CD8-positive, alpha-beta T cell (primary cell): ENCODE measurements at regions of chr22 and their contacts with region 1.

Region 1: DNA sequence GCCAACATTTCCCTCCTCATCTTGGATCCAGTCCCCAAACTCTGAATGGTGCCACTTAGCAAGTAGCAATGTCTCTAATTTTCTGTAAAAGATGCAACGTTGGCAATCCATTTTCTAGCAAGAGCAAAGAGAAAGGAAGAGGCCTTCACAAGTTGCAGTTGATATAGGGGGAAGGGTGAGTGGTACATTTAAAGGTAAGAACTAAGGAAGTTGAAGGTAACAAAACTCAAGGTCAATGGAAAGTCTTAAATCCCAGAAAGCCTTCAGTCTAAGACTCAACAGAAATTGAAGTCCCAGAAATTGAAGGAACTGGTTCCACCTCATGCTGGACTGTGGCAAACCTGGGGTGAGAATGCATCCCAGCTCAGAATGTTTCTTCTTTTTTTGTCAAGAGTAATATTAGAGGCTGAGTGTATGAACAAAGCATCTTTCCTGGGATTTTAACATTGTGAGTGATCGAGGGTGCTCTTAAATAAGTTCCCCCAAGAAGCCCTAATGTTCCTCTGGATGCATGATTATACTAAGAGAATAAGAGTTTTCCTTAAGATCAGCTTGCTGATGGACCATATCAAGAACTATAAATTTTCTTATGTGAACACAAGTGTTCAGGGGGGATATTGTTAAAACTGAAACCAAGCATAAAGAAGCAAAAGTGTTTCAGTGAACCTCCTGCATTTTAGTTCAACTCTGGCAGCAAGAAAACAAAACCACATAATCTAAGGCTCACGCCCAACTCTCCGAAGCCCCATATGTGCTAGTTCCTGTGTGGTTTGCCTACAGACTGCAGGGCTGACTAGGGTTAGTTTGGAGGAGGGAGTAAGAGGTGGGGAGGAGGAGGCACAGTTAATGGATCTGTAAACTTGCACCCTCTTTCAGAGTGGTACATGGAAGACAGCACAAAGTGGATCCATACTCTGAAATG is at the start of gene GRAP2:
- DNase-seq: peak; percentile 49 to 93 (median 74)
- ATAC-seq: peak; percentile 92
- H3K4me3 ChIP-seq: peak within 1 kb of the TSS; percentile 77 to 80
- H3K4me3 Mint-ChIP-seq: peak within 1 kb of the TSS; percentile 97
- H3K27ac ChIP-seq: peak within 1 kb of the TSS; percentile 71 to 80
- H3K27ac Mint-ChIP-seq: peak within 1 kb of the TSS; percentile 91
- H3K4me1 ChIP-seq: peaks cover 42% of the 10 kb centered on the region
- H3K4me1 Mint-ChIP-seq: peaks cover 27% of the 10 kb centered on the region
- H3K27me3 ChIP-seq: no peaks in the 10 kb centered on the region
- H3K27me3 Mint-ChIP-seq: no peaks in the 10 kb centered on the region
- CTCF ChIP-seq: no peak
- total RNA-seq, gene GRAP2: 105 TPM

Region 2: GRCh38 chr22:39927544-39927943 is 27.0 kb after region 1 on chr22:
- CTCF ChIA-PET with region 1: interaction called, 35 read pairs
- POLR2A ChIA-PET with region 1: interaction called, 260 read pairs
- intact Hi-C with region 1: loop called (anchors 2 kb)
- DNase-seq: peak in 2 of 9 experiments; percentile 11 to 52
- ATAC-seq: no peak
- H3K4me3 ChIP-seq: peak overlapping the region; percentile 56 to 76
- H3K4me3 Mint-ChIP-seq: no peak overlapping the region
- H3K27ac ChIP-seq: peak overlapping the region; percentile 29 to 49
- H3K27ac Mint-ChIP-seq: no peak overlapping the region
- H3K4me1 ChIP-seq: peaks cover 82% of the 10 kb centered on the region
- H3K4me1 Mint-ChIP-seq: peaks cover 40% of the 10 kb centered on the region
- H3K27me3 ChIP-seq: no peaks in the 10 kb centered on the region
- H3K27me3 Mint-ChIP-seq: no peaks in the 10 kb centered on the region
- CTCF ChIP-seq: peak; percentile 20

Region 3: DNA sequence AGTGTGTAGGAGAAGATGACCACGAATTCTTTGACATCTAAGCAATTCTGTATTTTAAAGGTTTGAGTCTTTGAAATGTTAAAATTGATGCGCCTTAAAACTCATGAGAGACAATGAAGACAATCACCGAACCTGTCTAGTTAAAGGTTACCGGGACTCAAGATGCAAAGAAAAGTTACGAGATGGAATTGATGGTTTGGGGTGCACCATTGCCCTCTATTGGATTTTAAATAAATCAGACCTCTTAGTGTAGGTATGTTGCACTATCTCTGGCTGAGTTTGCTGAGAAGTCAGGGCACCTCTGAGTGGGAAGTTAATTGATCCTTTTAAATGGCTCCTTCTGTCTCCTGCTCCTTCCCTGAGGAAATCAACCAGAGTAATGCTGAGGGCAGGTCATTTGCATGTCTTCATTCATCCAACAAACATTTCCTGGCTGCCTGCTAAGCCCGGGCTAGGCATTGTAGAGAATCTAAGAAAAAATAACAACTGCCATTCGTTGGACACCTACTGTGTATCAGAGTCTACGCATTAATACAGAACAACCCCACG is 40.3 kb after region 1 on chr22:
- CTCF ChIA-PET with region 1: interaction called, 50 read pairs
- POLR2A ChIA-PET with region 1: interaction called, 7 read pairs
- intact Hi-C with region 1: loop called (anchors 1 to 2 kb)
- DNase-seq: peak in 2 of 9 experiments; percentile 78 to 87
- ATAC-seq: peak; percentile 49
- H3K4me3 ChIP-seq: peak overlapping the region in 1 of 2 experiments; percentile 40
- H3K4me3 Mint-ChIP-seq: peak overlapping the region; percentile 56
- H3K27ac ChIP-seq: peak overlapping the region; percentile 22 to 76
- H3K27ac Mint-ChIP-seq: no peak overlapping the region
- H3K4me1 ChIP-seq: peaks cover 98% of the 10 kb centered on the region
- H3K4me1 Mint-ChIP-seq: peaks cover 92% of the 10 kb centered on the region
- H3K27me3 ChIP-seq: no peaks in the 10 kb centered on the region
- H3K27me3 Mint-ChIP-seq: no peaks in the 10 kb centered on the region
- CTCF ChIP-seq: peak; percentile 62

Region 4: GRCh38 chr22:39954584-39955055 is 54.1 kb after region 1 on chr22:
- CTCF ChIA-PET with region 1: interaction called, 10 read pairs
- POLR2A ChIA-PET with region 1: interaction called, 5 read pairs
- intact Hi-C with region 1: loop called in 1 of 2 experiments (anchors 2 kb)
- DNase-seq: no peak
- ATAC-seq: no peak
- H3K4me3 ChIP-seq: no peak overlapping the region
- H3K4me3 Mint-ChIP-seq: no peak overlapping the region
- H3K27ac ChIP-seq: peak overlapping the region in 1 of 2 experiments; percentile 31
- H3K27ac Mint-ChIP-seq: peak overlapping the region; percentile 92
- H3K4me1 ChIP-seq: peaks cover 94% of the 10 kb centered on the region
- H3K4me1 Mint-ChIP-seq: peaks cover 88% of the 10 kb centered on the region
- H3K27me3 ChIP-seq: no peaks in the 10 kb centered on the region
- H3K27me3 Mint-ChIP-seq: no peaks in the 10 kb centered on the region
- CTCF ChIP-seq: no peak

Region 5: DNA sequence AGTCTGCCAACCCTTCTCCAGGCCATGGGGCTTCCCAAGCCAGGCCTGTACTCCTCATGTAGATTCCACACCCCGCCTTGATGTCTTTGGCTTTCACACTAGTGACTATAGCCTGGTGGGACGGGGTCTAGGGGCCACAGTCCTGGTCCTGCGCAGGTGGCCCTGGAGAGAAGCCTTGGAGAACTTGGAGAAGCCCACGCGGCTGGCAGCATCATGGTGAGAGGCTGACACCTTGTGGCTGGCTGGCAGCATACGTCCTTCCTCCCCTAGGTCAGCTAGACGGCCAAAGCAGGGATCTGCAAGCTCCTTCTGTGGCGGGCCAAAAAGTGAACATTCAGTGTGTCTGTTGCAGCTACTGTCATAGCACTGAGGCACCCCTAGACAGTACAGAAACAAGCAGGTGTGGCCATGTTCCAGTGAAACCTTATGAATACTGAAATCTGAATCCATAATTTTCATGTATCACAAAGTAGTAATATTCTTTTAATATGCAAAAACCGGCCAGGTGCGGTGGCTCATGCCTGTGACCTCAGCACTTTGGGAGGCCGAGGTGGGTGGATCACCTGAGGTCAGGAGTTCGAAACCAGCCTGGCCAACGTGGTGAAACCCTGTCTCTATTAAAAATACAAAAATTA is 136.1 kb after region 1 on chr22:
- CTCF ChIA-PET with region 1: interaction called, 13 read pairs
- POLR2A ChIA-PET with region 1: no interaction called
- intact Hi-C with region 1: loop called (anchors 5 kb)
- DNase-seq: peak in 8 of 9 experiments; percentile 31 to 71 (median 46)
- ATAC-seq: peak; percentile 67
- H3K4me3 ChIP-seq: no peak overlapping the region
- H3K4me3 Mint-ChIP-seq: no peak overlapping the region
- H3K27ac ChIP-seq: no peak overlapping the region
- H3K27ac Mint-ChIP-seq: no peak overlapping the region
- H3K4me1 ChIP-seq: no peaks in the 10 kb centered on the region
- H3K4me1 Mint-ChIP-seq: peaks cover 10% of the 10 kb centered on the region
- H3K27me3 ChIP-seq: no peaks in the 10 kb centered on the region
- H3K27me3 Mint-ChIP-seq: peaks cover 21% of the 10 kb centered on the region
- CTCF ChIP-seq: peak; percentile 61

Region 6: GRCh38 chr22:40326905-40327735 is 426.6 kb after region 1 on chr22:
- CTCF ChIA-PET with region 1: no interaction called
- POLR2A ChIA-PET with region 1: no interaction called
- intact Hi-C with region 1: loop called in 1 of 2 experiments (anchors 10 kb)
- DNase-seq: peak in 2 of 9 experiments; percentile 44 to 62
- ATAC-seq: peak; percentile 7
- H3K4me3 ChIP-seq: peak overlapping the region in 1 of 2 experiments; percentile 3
- H3K4me3 Mint-ChIP-seq: peak overlapping the region; percentile 53
- H3K27ac ChIP-seq: peak overlapping the region; percentile 9 to 54
- H3K27ac Mint-ChIP-seq: peak overlapping the region; percentile 92
- H3K4me1 ChIP-seq: peaks cover 96% of the 10 kb centered on the region
- H3K4me1 Mint-ChIP-seq: peaks cover 99% of the 10 kb centered on the region
- H3K27me3 ChIP-seq: no peaks in the 10 kb centered on the region
- H3K27me3 Mint-ChIP-seq: no peaks in the 10 kb centered on the region
- CTCF ChIP-seq: no peak